ENCODE measurements at regions of chr1 and their contacts with region 1.

Region 1: DNA sequence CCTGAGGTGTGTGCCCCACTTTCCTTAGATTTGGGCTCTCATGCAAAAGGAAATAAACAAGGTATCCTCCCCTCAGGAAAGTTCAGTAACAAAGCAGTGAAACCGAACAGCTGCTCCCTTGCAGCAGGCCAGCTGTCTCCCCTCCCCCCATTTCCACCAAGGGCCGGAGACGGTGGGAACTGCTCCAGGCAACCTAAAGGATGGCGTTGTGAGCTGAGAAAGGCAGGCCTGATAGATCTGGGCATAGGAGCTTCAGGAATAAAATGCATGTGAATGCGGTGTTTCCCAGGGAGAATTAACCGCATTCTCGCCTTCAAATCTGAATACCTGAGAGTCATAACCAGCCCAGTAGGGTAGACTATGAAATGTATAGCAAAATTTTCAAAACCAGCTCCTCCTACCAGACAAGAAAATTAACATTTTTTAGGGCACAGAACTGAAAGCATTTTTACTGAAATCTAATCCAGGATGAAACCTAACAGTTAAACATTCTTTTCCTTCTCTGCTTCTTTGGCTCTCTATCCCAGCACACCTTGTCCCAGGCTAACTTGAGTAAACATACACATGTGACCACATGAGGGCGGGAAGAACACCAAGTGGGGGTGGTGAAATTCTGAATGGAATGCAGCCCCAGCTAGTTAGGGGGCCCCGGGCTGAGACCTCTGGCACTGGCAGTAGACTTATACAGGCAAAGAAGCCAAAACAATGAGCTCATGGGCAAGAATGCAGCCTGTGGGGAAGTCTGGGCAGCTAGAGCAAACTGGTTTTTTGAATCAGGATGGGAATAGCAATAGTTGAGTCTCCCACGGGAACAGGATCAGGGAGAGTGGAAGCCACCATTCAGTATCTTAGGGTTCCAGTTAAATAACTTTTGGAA is 11.5 kb downstream of the MCL1 start:
- DNase-seq: peak; percentile 56
- H3K4me3 Mint-ChIP-seq: peak overlapping the region; percentile 90
- H3K27ac Mint-ChIP-seq: peak overlapping the region; percentile 98
- H3K4me1 Mint-ChIP-seq: peaks cover 88% of the 10 kb centered on the region
- H3K27me3 Mint-ChIP-seq: no peaks in the 10 kb centered on the region

Region 2: DNA sequence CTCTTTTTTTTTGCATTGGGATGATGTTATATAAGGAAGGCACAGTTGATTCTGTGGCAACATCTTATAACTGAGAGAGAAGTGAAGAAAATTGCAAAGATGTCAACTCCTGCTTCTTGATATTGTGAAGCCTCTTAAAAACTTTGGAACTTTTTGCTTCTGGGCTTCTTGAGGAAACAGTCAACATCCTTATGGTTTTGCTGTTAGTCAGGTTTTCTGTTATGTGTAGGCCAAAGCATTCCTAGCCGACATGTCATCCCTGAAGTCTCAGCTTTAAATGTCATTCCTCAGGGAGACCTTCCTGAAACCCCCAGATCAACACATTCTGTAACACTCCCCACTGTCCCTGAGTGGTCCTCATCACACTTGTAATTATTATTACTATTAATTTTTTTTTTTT is 39.8 kb before region 1 on chr1:
- intact Hi-C with region 1: no loop called
- DNase-seq: no peak
- H3K4me3 Mint-ChIP-seq: no peak overlapping the region
- H3K27ac Mint-ChIP-seq: no peak overlapping the region
- H3K4me1 Mint-ChIP-seq: peaks cover 4% of the 10 kb centered on the region
- H3K27me3 Mint-ChIP-seq: peaks cover 6% of the 10 kb centered on the region

Region 3: GRCh38 chr1:150543500-150544141 is 24.3 kb before region 1 on chr1:
- intact Hi-C with region 1: no loop called
- DNase-seq: no peak
- H3K4me3 Mint-ChIP-seq: no peak overlapping the region
- H3K27ac Mint-ChIP-seq: no peak overlapping the region
- H3K4me1 Mint-ChIP-seq: peaks cover 4% of the 10 kb centered on the region
- H3K27me3 Mint-ChIP-seq: peaks cover 14% of the 10 kb centered on the region

Region 4: DNA sequence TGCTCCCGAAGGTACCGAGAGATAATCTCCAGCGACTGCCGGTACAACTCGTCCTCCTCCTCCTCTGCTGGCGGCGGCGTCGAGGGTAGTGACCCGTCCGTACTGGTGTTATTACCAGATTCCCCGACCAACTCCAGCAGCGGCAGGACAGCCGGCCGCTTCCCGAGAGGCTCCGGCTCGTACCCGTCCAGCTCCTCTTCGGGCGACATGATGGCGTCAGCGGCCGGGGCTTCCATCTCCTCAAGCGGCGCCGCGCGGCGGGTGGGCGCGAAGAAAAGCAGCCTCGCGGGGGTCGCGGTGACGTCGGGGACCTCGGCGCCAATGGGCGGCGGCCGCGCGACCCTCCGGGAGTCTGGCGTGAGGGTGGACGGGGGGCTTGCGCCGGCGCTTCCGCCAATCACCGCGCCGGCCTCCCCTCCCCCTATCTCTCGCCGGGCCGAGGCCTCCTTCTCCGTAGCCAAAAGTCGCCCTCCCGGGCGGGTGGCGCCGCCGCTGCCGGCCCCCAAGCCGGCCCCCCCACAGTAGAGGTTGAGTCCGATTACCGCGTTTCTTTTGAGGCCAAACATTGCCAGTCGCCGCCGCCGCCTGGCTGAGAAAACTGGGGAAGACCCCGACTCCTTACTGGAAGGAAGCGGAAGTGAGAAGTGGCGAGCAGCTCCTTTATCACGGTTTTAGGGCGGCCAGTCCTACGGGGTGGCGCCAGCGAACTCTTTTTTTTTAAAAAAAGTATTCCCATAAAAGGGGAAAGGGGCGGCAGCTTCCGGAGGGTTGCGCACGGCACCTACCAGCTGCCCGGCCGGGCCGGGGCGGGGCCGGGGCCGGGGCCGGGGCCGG is 11.2 kb after region 1 on chr1 and contains the start of gene MCL1:
- intact Hi-C with region 1: loop called (anchors 1 kb)
- DNase-seq: peak; percentile 92
- H3K4me3 Mint-ChIP-seq: peak within 1 kb of the TSS; percentile 95
- H3K27ac Mint-ChIP-seq: peak within 1 kb of the TSS; percentile 97
- H3K4me1 Mint-ChIP-seq: peaks cover 35% of the 10 kb centered on the region
- H3K27me3 Mint-ChIP-seq: peaks cover 2% of the 10 kb centered on the region
- total RNA-seq, gene MCL1: 311 and 317 TPM in 2 replicates

Region 5: GRCh38 chr1:150613061-150613920 is 45.3 kb after region 1 on chr1:
- intact Hi-C with region 1: loop called (anchors 1 kb)
- DNase-seq: peak; percentile 49
- H3K4me3 Mint-ChIP-seq: peak overlapping the region; percentile 53
- H3K27ac Mint-ChIP-seq: peak overlapping the region; percentile 98
- H3K4me1 Mint-ChIP-seq: peaks cover 62% of the 10 kb centered on the region
- H3K27me3 Mint-ChIP-seq: no peaks in the 10 kb centered on the region

Region 6: GRCh38 chr1:150765296-150765976 is 197.5 kb after region 1 on chr1 and contains the start of gene CTSS:
- intact Hi-C with region 1: loop called (anchors 5 kb)
- DNase-seq: no peak
- H3K4me3 Mint-ChIP-seq: peak within 1 kb of the TSS; percentile 92
- H3K27ac Mint-ChIP-seq: peak within 1 kb of the TSS; percentile 94
- H3K4me1 Mint-ChIP-seq: peaks cover 40% of the 10 kb centered on the region
- H3K27me3 Mint-ChIP-seq: peaks cover 13% of the 10 kb centered on the region
- total RNA-seq, gene CTSS: 31.7 and 34.2 TPM in 2 replicates

Measured in activated T-helper 1 cell treated with anti-CD3 and anti-CD28 coated beads, Interleukin-12 subunit alpha, Interleukin-12 subunit beta, Interleukin-2, Interleukin-4 antibody, amounts not matched to agents 30 ng/mL and 10 ng/mL and 1 ng/mL, durations not matched to agents 14 hours and 24 hours and 36 hours (primary cell).